ENCODE measurements at regions of chr20 and their contacts with region 1.

Region 1: DNA sequence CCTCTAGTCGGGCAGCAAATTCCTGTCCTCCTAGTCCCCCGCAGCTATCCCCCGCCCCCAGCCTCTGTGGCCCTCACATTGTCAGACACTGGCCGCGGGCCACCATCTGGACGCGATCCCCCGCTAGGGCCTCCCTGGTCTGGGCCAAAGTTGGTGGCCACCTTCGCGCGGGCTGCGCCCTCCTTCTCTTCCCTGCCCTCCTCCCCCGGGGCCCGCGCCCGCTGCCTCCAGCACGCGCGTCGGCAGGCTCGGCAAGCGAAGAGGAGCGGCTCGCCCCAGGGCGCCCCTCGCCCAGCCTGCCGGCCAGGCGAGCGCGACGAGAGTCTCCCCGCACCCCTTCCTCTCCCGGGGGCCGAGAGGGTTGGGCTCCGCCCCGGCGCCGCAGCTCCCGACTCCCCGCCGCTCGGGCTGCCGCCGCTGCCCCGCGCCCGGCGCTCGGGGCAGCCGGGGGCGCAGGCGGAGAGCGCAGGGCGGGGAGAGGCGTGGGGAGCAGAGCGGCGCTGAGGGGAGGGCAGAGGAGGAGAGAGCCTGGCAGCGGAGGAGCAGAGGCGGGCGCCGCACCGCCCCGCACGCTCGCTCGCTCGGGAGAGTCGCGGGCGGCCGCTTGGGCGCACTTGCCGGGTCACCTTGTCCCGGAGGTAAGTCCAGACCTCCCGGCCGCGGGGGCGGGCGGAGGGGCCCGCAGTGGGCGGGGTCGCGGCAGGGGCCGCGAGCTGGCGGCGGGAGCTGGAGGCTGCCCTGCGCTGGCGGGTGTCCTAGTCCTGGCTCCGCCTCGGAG is at the start of gene SYNDIG1:
- ATAC-seq: peak; percentile 64 to 89 (median 85)
- H3K4me3 ChIP-seq: peak within 1 kb of the TSS; percentile 45 to 78 (median 63)
- H3K27ac ChIP-seq: peak within 1 kb of the TSS; percentile 11 to 23
- H3K4me1 ChIP-seq: peaks cover 0 to 7% of the 10 kb centered on the region in 2 donors
- total RNA-seq, gene SYNDIG1: 5.0 to 64.6 (median 11.3) TPM

Region 2: GRCh38 chr20:24160563-24161375 is 308.5 kb before region 1 on chr20:
- in situ Hi-C with region 1: loop called in 1 of 9 experiments (anchors 25 kb)
- ATAC-seq: peak in 6 of 8 experiments; percentile 47 to 82 (median 73)
- H3K4me3 ChIP-seq: no peak overlapping the region
- H3K27ac ChIP-seq: no peak overlapping the region
- H3K4me1 ChIP-seq: peaks cover 0 to 14% of the 10 kb centered on the region in 2 donors

Region 3: GRCh38 chr20:24357177-24357576 is 112.1 kb before region 1 on chr20:
- in situ Hi-C with region 1: no loop called
- ATAC-seq: peak in 3 of 8 experiments; percentile 11 to 53 (median 18)
- H3K4me3 ChIP-seq: no peak overlapping the region
- H3K27ac ChIP-seq: no peak overlapping the region
- H3K4me1 ChIP-seq: peaks cover 7 to 10% of the 10 kb centered on the region in 2 donors

Measured in motor neuron (in vitro differentiated cells).